ENCODE measurements at regions of chr12 and their contacts with region 1.

Region 1: GRCh38 chr12:122399592-122400373 is 22.7 kb downstream of the CLIP1 start:
- DNase-seq: no peak
- H3K4me3 ChIP-seq: peak overlapping the region; percentile 21 to 26 (median 21)
- H3K27ac ChIP-seq: peak overlapping the region; percentile 87 to 95 (median 90)
- H3K4me1 ChIP-seq: peaks cover 16 to 85% (median 76%) of the 10 kb centered on the region in 4 donors
- H3K27me3 ChIP-seq: no peaks in the 10 kb centered on the region
- CTCF ChIP-seq: peak; percentile 70 to 83 (median 71)
- EP300 ChIP-seq: no peak
- POLR2A ChIP-seq: no peak

Region 2: GRCh38 chr12:122421821-122422729 is 22.3 kb after region 1 on chr12 and contains the start of gene CLIP1:
- intact Hi-C with region 1: loop called (anchors 2 kb)
- DNase-seq: peak; percentile 92
- H3K4me3 ChIP-seq: peak within 1 kb of the TSS; percentile 78 to 100 (median 92)
- H3K27ac ChIP-seq: peak within 1 kb of the TSS; percentile 99 to 100 (median 100)
- H3K4me1 ChIP-seq: peaks cover 23 to 56% (median 55%) of the 10 kb centered on the region in 4 donors
- H3K27me3 ChIP-seq: no peaks in the 10 kb centered on the region
- CTCF ChIP-seq: peak; percentile 31 to 62 (median 39)
- EP300 ChIP-seq: no peak
- POLR2A ChIP-seq: peak; percentile 53
- total RNA-seq, gene CLIP1: 234 to 263 (median 250) TPM